Colonic mucosa (tissue), 4 donors: ENCODE measurements at regions of chr11 and their contacts with region 1.

Region 1: DNA sequence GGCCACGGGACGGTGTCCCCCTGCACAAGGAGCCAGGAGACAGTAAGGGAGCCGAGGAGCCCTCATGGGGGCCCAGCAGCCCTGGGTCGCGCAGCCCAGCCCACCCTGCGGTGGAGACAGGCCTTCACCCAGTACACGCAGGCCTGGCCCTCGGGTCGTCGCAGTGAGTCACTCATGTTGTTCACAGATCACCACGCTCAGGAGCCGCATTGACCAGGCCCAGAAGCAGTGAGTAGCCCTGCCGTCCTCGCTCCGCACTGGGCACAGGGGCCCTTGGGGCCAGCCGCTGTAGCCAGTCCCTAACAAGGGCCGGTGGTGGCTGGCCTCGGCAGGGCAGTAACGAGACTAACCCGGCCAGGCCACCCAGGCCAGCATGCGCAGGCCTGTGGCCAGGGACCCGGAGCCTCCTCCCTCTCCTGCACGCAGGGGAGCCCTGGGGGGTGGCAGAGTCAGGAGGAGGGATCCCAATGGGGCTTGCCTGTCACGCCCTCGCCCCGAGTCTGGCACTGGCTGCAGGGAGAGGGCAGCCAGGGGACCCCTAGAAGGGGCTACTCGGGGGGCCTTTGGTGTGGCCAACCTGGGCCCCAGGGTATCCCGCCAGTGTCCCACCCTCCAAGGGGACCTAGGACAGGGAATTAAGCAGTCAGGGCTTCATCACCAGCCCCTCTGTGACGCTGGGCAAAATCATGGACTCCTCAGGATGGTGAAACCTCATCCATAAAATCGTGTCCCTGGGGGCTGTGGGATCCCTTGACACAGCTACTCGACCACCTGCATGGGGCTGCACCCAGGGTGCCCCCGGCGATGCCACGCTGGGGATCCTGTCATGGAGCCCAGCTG is 10.1 kb upstream of the MRPL23 start:
- DNase-seq: no peak
- H3K4me3 ChIP-seq: no peak overlapping the region
- H3K27ac ChIP-seq: no peak overlapping the region
- H3K4me1 ChIP-seq: no peaks in the 10 kb centered on the region
- H3K27me3 ChIP-seq: no peaks in the 10 kb centered on the region
- CTCF ChIP-seq: no peak

Region 2: GRCh38 chr11:1747753-1748635 is 189.0 kb before region 1 on chr11:
- intact Hi-C with region 1: no loop called
- DNase-seq: no peak
- H3K4me3 ChIP-seq: no peak overlapping the region
- H3K27ac ChIP-seq: no peak overlapping the region
- H3K4me1 ChIP-seq: no peaks in the 10 kb centered on the region
- H3K27me3 ChIP-seq: peaks cover 14% of the 10 kb centered on the region
- CTCF ChIP-seq: no peak

Region 3: DNA sequence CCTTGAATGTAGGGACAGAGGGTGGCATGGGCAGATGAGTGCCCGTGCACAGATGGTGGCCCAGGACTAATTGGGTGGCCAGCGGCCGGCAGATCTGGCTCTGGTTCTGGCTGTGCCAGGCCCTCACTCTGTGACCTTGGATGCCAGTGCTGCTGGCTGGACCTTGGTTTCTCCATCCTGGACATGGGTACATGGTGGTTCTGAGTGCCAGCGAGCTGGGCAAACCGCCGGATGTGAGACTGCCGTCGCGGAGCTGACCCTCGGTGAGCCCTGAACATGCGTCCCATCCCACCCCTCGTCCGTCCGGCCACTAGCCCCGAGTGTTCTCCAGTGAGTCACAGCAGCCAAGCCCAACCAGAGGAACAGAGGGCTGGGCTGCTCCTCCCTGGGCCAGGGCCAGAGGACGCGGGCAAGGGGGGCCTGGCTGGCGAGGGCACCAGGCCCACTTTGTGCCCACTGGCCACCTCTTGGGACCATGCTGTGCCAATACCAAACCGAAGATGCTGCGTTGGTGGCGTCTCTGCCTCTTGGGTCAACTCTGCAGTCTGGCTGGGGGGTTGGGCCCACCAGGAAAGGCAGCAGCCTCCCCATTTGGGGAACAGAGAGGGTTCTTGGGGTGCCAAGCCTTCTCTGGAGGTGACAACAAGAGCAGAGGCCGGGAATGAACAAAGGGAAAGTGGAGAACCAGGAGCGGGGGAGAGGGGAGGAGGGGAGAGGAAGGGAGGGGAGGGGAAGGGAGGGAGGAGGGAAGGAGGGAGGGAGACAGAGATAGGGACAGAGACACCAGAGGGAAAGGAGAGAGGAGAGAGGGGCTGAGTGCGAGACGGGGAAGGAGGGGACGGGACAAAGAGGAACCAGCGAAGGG is 73.4 kb before region 1 on chr11:
- intact Hi-C with region 1: no loop called
- DNase-seq: peak; percentile 58
- H3K4me3 ChIP-seq: no peak overlapping the region
- H3K27ac ChIP-seq: peak overlapping the region; percentile 65
- H3K4me1 ChIP-seq: no peaks in the 10 kb centered on the region
- H3K27me3 ChIP-seq: no peaks in the 10 kb centered on the region
- CTCF ChIP-seq: no peak

Region 4: GRCh38 chr11:1917671-1918516 is 19.1 kb before region 1 on chr11:
- intact Hi-C with region 1: loop called (anchors 2 kb)
- DNase-seq: no peak
- H3K4me3 ChIP-seq: no peak overlapping the region
- H3K27ac ChIP-seq: no peak overlapping the region
- H3K4me1 ChIP-seq: no peaks in the 10 kb centered on the region
- H3K27me3 ChIP-seq: no peaks in the 10 kb centered on the region
- CTCF ChIP-seq: peak; percentile 33